ENCODE measurements at regions of chr13 and their contacts with region 1.

Region 1: GRCh38 chr13:73754727-73755292 is 379.4 kb downstream of the KLF12 start:
- DNase-seq: peak; percentile 90
- H3K4me3 ChIP-seq: no peak overlapping the region
- H3K27ac ChIP-seq: peak overlapping the region; percentile 40
- H3K4me1 ChIP-seq: peaks cover 38% of the 10 kb centered on the region
- H3K27me3 ChIP-seq: no peaks in the 10 kb centered on the region
- CTCF ChIP-seq: peak; percentile 72

Region 2: DNA sequence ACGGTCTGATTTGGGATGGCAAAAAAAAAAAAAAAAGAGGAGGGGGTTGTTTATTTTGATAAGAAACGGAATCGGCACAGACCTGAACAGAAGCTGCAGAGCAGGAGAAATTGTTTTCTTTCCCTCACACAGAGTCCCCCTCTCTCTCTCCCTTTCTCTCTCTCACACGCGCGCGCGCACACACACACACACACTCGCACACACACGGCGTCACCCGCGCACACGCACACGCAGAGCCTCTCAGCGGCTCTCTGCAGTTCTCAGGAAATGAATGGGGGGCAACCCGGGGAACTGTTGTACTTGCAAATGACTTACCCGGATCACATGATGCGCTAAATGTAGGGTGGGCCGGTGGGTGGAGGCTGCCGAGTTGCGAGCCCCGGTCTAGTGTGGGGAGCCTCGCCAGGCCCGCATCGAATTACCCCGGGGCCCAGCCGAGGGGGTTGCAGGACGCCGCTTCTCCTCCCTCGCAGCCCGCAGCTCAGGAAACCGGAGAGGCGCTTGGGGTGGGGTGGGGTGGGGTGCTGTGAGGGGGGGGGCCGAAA is 378.9 kb after region 1 on chr13:
- CTCF ChIA-PET with region 1: no interaction called
- POLR2A ChIA-PET with region 1: no interaction called
- intact Hi-C with region 1: loop called (anchors 2 kb)
- DNase-seq: peak; percentile 95
- H3K4me3 ChIP-seq: peak overlapping the region; percentile 84
- H3K27ac ChIP-seq: peak overlapping the region; percentile 83
- H3K4me1 ChIP-seq: peaks cover 24% of the 10 kb centered on the region
- H3K27me3 ChIP-seq: no peaks in the 10 kb centered on the region
- CTCF ChIP-seq: no peak

Region 3: GRCh38 chr13:74464670-74465069 is 709.9 kb after region 1 on chr13:
- CTCF ChIA-PET with region 1: no interaction called
- POLR2A ChIA-PET with region 1: no interaction called
- intact Hi-C with region 1: loop called (anchors 10 kb)
- DNase-seq: peak; percentile 92
- H3K4me3 ChIP-seq: no peak overlapping the region
- H3K27ac ChIP-seq: peak overlapping the region; percentile 74
- H3K4me1 ChIP-seq: peaks cover 47% of the 10 kb centered on the region
- H3K27me3 ChIP-seq: no peaks in the 10 kb centered on the region
- CTCF ChIP-seq: no peak

Region 4: GRCh38 chr13:75219479-75220237 is 1464.8 kb after region 1 on chr13:
- CTCF ChIA-PET with region 1: interaction called, 4 read pairs
- POLR2A ChIA-PET with region 1: no interaction called
- intact Hi-C with region 1: loop called (anchors 2 kb)
- DNase-seq: peak; percentile 82
- H3K4me3 ChIP-seq: peak overlapping the region; percentile 28
- H3K27ac ChIP-seq: no peak overlapping the region
- H3K4me1 ChIP-seq: no peaks in the 10 kb centered on the region
- H3K27me3 ChIP-seq: no peaks in the 10 kb centered on the region
- CTCF ChIP-seq: peak; percentile 99